Activated naive CD4-positive, alpha-beta T cell treated with anti-CD3 and anti-CD28 coated beads, Interleukin-2, amount 10 ng/mL, durations not matched to agents 7 days and 5 days (primary cell): ENCODE measurements at regions of chr2 and their contacts with region 1.

Region 1: GRCh38 chr2:37877457-37878315 is 47.4 kb upstream of the RMDN2 start:
- DNase-seq: peak; percentile 40
- H3K4me3 Mint-ChIP-seq: no peak overlapping the region
- H3K27ac Mint-ChIP-seq: no peak overlapping the region
- H3K4me1 Mint-ChIP-seq: peaks cover 2% of the 10 kb centered on the region
- H3K27me3 Mint-ChIP-seq: peaks cover 25% of the 10 kb centered on the region

Region 2: GRCh38 chr2:37414470-37414949 is 463.2 kb before region 1 on chr2:
- CTCF ChIA-PET with region 1: interaction called, 71 read pairs
- DNase-seq: no peak
- H3K4me3 Mint-ChIP-seq: no peak overlapping the region
- H3K27ac Mint-ChIP-seq: no peak overlapping the region
- H3K4me1 Mint-ChIP-seq: no peaks in the 10 kb centered on the region
- H3K27me3 Mint-ChIP-seq: peaks cover 39% of the 10 kb centered on the region

Region 3: GRCh38 chr2:37832590-37833197 is 45.0 kb before region 1 on chr2:
- CTCF ChIA-PET with region 1: interaction called, 33 read pairs
- DNase-seq: peak; percentile 87
- H3K4me3 Mint-ChIP-seq: no peak overlapping the region
- H3K27ac Mint-ChIP-seq: no peak overlapping the region
- H3K4me1 Mint-ChIP-seq: peaks cover 16% of the 10 kb centered on the region
- H3K27me3 Mint-ChIP-seq: peaks cover 7% of the 10 kb centered on the region

Region 4: GRCh38 chr2:37851828-37852584 is 25.7 kb before region 1 on chr2:
- CTCF ChIA-PET with region 1: interaction called, 14 read pairs
- DNase-seq: no peak
- H3K4me3 Mint-ChIP-seq: no peak overlapping the region
- H3K27ac Mint-ChIP-seq: peak overlapping the region; percentile 64
- H3K4me1 Mint-ChIP-seq: peaks cover 35% of the 10 kb centered on the region
- H3K27me3 Mint-ChIP-seq: peaks cover 19% of the 10 kb centered on the region